ENCODE measurements at regions of chr21 and their contacts with region 1.

Region 1: GRCh38 chr21:28884976-28885852 is 107.5 kb downstream of the LTN1 start:
- DNase-seq: peak; percentile 84 to 95 (median 92)
- ATAC-seq: peak; percentile 95
- H3K4me3 ChIP-seq: peak overlapping the region; percentile 71
- H3K4me3 Mint-ChIP-seq: peak overlapping the region; percentile 89 to 99 (median 94)
- H3K27ac ChIP-seq: peak overlapping the region; percentile 80
- H3K27ac Mint-ChIP-seq: peak overlapping the region; percentile 98 to 99 (median 99)
- H3K4me1 ChIP-seq: peaks cover 9 to 14% of the 10 kb centered on the region in 2 donors
- H3K4me1 Mint-ChIP-seq: peaks cover 8 to 25% (median 20%) of the 10 kb centered on the region in 7 donors
- H3K27me3 ChIP-seq: no peaks in the 10 kb centered on the region
- H3K27me3 Mint-ChIP-seq: peaks cover 0 to 29% (median 0%) of the 10 kb centered on the region in 5 donors

Region 2: DNA sequence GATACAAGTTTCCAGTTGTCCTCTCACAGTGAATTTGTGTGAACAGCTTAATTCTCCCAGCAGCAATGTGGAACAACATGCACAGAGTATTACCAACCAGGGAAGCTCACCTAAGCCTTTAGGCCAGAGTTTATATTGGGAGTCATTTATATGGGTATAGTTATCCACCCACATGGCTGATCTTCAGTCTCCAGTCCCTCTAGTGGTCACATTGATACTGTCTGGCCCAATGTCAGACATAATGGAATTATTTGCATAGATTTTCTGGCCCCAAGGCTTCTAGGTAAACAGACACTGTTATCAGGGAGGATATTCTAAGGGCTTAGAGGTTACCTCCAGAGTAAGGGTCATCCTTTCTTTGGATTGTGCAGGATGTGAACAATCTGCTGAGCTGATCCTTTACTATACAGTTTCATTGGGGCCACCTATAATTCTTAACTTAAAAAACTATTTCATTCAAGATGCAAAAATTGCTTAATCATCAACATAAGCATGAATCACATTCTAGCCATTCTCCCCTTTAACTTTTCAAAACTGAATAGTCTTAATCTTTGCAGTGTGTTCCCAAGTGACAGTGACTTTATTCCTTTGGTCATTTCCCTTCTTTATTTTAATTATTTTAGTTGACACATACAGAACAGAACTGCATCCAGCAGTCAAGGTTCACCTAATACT is 103.5 kb before region 1 on chr21:
- CTCF ChIA-PET with region 1: no interaction called
- POLR2A ChIA-PET with region 1: no interaction called
- intact Hi-C with region 1: no loop called
- DNase-seq: no peak
- ATAC-seq: no peak
- H3K4me3 ChIP-seq: no peak overlapping the region
- H3K4me3 Mint-ChIP-seq: no peak overlapping the region
- H3K27ac ChIP-seq: no peak overlapping the region
- H3K27ac Mint-ChIP-seq: no peak overlapping the region
- H3K4me1 ChIP-seq: no peaks in the 10 kb centered on the region
- H3K4me1 Mint-ChIP-seq: peaks cover 0 to 14% (median 0%) of the 10 kb centered on the region in 7 donors
- H3K27me3 ChIP-seq: no peaks in the 10 kb centered on the region
- H3K27me3 Mint-ChIP-seq: no peaks in the 10 kb centered on the region

Region 3: GRCh38 chr21:28832013-28832714 is 53.0 kb before region 1 on chr21:
- CTCF ChIA-PET with region 1: no interaction called
- POLR2A ChIA-PET with region 1: interaction called, 27 read pairs
- intact Hi-C with region 1: loop called (anchors 1 kb)
- DNase-seq: peak in 6 of 9 donors; percentile 29 to 64 (median 52)
- ATAC-seq: peak; percentile 91
- H3K4me3 ChIP-seq: peak overlapping the region; percentile 21
- H3K4me3 Mint-ChIP-seq: peak overlapping the region; percentile 12 to 75 (median 68)
- H3K27ac ChIP-seq: no peak overlapping the region
- H3K27ac Mint-ChIP-seq: peak overlapping the region; percentile 2 to 97 (median 68)
- H3K4me1 ChIP-seq: peaks cover 52 to 56% of the 10 kb centered on the region in 2 donors
- H3K4me1 Mint-ChIP-seq: peaks cover 46 to 82% (median 76%) of the 10 kb centered on the region in 7 donors
- H3K27me3 ChIP-seq: no peaks in the 10 kb centered on the region
- H3K27me3 Mint-ChIP-seq: no peaks in the 10 kb centered on the region

Region 4: DNA sequence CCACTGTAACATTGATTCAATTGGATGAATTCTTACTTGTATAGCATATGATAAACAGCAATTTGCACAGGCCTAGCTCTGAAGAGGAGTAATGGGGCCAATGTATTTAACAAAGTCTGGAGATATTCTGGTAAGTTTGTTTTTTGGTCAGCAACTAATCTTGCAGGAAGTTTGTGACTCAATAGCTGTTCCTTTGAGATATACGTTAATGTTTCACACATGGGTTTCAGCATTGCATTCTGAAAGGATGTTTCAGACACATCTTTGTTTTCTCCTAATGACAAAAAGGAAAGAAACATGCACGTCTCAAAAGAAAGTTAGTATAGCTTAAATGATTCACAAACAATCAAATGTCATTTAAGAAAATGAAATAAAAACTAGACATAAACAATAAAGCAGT is 58.4 kb after region 1 on chr21:
- CTCF ChIA-PET with region 1: no interaction called
- POLR2A ChIA-PET with region 1: no interaction called
- intact Hi-C with region 1: loop called (anchors 2 to 5 kb)
- DNase-seq: no peak
- ATAC-seq: no peak
- H3K4me3 ChIP-seq: no peak overlapping the region
- H3K4me3 Mint-ChIP-seq: no peak overlapping the region
- H3K27ac ChIP-seq: no peak overlapping the region
- H3K27ac Mint-ChIP-seq: peak overlapping the region in 1 of 9 donors; percentile 15
- H3K4me1 ChIP-seq: no peaks in the 10 kb centered on the region
- H3K4me1 Mint-ChIP-seq: peaks cover 0 to 9% (median 0%) of the 10 kb centered on the region in 7 donors
- H3K27me3 ChIP-seq: no peaks in the 10 kb centered on the region
- H3K27me3 Mint-ChIP-seq: no peaks in the 10 kb centered on the region

Region 5: DNA sequence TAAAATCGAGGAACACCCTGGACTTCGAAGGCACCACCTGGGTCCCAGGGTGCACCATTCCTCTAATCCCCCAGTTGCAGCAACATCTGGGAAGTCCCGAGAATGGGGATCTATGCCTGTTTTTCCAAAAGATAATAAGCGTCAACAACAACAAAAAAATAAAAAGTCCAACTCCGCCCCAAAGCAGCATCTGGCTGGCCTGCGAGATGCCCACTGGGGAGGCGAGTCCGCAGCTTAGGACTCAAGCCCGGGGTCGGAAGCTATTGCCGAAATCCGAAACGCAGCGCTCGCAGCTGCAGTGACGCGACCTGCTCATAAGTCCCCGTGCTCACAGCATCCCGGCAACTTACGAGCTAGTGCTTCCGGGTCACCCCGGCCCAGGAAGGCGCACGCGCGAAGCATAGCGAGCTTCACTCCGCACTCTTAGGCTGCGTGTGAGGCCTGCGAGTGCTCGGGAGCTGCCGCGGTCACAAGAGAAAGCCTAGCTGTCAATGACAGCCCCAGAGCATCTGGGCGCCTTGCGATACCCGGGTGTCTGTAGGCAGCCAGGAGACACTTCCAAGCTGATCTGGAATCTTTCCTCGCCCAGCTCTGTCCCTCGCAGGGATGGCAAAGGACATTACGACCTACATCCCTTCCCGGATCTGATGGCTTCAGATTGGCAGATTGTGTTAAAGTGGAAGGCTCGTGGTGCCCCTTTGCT is 117.4 kb after region 1 on chr21:
- CTCF ChIA-PET with region 1: no interaction called
- POLR2A ChIA-PET with region 1: interaction called, 7 read pairs
- intact Hi-C with region 1: loop called in 1 of 2 experiments (anchors 1 kb)
- DNase-seq: peak; percentile 90 to 96 (median 94)
- ATAC-seq: peak; percentile 100
- H3K4me3 ChIP-seq: peak overlapping the region; percentile 86
- H3K4me3 Mint-ChIP-seq: peak overlapping the region; percentile 85 to 95 (median 93)
- H3K27ac ChIP-seq: peak overlapping the region; percentile 92
- H3K27ac Mint-ChIP-seq: peak overlapping the region; percentile 97 to 99 (median 99)
- H3K4me1 ChIP-seq: peaks cover 0 to 3% of the 10 kb centered on the region in 2 donors
- H3K4me1 Mint-ChIP-seq: peaks cover 0 to 22% (median 10%) of the 10 kb centered on the region in 7 donors
- H3K27me3 ChIP-seq: no peaks in the 10 kb centered on the region
- H3K27me3 Mint-ChIP-seq: no peaks in the 10 kb centered on the region

Measured in naive thymus-derived CD4-positive, alpha-beta T cell (primary cell).